Activated naive CD8-positive, alpha-beta T cell treated with anti-CD3 and anti-CD28 coated beads, Interleukin-2, amount 10 ng/mL, durations not matched to agents 7 days and 5 days (primary cell): ENCODE measurements at regions of chr13 and their contacts with region 1.

Region 1: DNA sequence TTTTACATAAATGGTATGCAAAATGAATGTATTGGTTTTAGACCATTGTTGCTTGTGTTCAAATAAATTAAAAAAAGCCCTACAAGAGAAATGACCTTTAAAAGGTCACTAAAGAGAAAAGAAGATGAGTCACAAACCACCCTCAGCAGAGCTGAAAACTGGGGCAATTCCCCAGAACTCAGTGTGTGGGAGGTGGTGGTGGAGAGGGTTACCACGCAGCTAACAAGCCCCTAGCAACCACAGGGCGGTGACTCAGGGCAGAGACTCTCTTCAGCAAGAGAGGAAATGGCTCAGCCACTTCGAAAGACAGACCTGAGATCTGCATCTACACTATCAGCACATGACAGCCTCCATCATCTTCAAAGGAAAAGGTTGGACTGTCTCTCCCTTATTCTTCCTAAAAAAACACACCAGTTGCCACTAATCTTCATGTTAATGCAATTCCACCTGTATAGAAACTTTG is 29.4 kb upstream of the NDFIP2 start:
- DNase-seq: peak; percentile 78
- ATAC-seq: peak; percentile 100
- H3K4me3 Mint-ChIP-seq: peak overlapping the region; percentile 51
- H3K27ac Mint-ChIP-seq: peak overlapping the region; percentile 75
- H3K4me1 Mint-ChIP-seq: peaks cover 42% of the 10 kb centered on the region
- H3K27me3 Mint-ChIP-seq: peaks cover 7% of the 10 kb centered on the region

Region 2: GRCh38 chr13:79480954-79481684 is 29.6 kb after region 1 on chr13 and contains the start of gene NDFIP2:
- POLR2A ChIA-PET with region 1: interaction called, 14 read pairs
- DNase-seq: peak; percentile 92
- ATAC-seq: peak; percentile 84
- H3K4me3 Mint-ChIP-seq: peak within 1 kb of the TSS; percentile 97
- H3K27ac Mint-ChIP-seq: peak within 1 kb of the TSS; percentile 79
- H3K4me1 Mint-ChIP-seq: peaks cover 40% of the 10 kb centered on the region
- H3K27me3 Mint-ChIP-seq: peaks cover 35% of the 10 kb centered on the region
- total RNA-seq, gene NDFIP2: 6.7 to 9.8 TPM